ENCODE measurements at regions of chr16 and their contacts with region 1.

Region 1: DNA sequence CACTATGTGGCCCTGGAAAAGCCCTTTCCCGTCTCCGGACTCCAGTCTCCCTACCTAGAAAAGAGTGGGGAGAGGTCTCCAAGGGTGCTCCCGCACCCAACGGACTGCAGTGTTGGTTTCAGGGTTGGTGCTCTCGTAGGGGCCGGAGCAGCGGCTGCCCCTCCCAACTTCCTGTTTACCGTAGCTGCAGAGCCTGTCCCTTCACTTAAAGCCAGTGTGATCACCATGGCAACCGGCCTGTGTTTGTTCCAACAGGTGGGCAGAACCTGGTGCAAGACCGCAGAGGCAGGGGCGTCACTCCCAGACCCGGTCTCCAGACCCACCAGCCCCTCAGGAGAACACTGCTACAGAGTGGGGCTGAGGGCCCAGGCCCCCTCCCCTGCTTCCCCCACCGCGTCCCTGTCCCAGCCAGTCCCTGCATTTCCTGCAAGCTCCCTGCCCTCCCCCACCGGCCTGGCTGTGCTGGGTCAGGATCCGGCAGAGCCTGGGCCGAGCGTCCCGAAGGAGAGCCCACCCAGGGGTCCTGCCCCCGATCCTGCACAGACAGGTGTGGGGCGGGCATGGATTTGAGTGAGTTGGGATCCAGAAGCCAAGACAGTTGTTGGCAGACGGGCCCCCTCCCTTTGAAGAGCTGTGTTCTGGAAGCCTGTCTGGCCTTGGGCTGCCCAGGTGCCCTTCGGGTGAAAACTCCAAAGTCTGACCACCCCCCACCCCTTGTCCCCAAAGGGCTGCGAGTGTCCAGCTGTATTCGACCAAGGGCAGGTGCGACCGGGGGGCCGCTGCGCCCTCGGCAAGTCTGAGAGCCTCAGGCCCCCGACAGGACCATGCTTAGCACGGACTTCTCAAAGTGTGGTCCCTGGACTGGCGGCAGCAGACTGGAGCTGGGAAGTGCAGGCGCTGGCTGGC is 1.5 kb upstream of the BAIAP3 start:
- DNase-seq: peak; percentile 90
- ATAC-seq: peak; percentile 65
- H3K4me3 ChIP-seq: peak overlapping the region; percentile 34 to 63 (median 48)
- H3K4me3 Mint-ChIP-seq: peak overlapping the region; percentile 88
- H3K27ac ChIP-seq: peak overlapping the region; percentile 90 to 91
- H3K27ac Mint-ChIP-seq: peak overlapping the region; percentile 96
- H3K4me1 ChIP-seq: peaks cover 48 to 66% of the 10 kb centered on the region in 2 donors
- H3K4me1 Mint-ChIP-seq: peaks cover 23% of the 10 kb centered on the region
- H3K27me3 ChIP-seq: peaks cover 0 to 47% (median 20%) of the 10 kb centered on the region in 4 experiments
- H3K27me3 Mint-ChIP-seq: peaks cover 7% of the 10 kb centered on the region
- CTCF ChIP-seq: no peak

Region 2: DNA sequence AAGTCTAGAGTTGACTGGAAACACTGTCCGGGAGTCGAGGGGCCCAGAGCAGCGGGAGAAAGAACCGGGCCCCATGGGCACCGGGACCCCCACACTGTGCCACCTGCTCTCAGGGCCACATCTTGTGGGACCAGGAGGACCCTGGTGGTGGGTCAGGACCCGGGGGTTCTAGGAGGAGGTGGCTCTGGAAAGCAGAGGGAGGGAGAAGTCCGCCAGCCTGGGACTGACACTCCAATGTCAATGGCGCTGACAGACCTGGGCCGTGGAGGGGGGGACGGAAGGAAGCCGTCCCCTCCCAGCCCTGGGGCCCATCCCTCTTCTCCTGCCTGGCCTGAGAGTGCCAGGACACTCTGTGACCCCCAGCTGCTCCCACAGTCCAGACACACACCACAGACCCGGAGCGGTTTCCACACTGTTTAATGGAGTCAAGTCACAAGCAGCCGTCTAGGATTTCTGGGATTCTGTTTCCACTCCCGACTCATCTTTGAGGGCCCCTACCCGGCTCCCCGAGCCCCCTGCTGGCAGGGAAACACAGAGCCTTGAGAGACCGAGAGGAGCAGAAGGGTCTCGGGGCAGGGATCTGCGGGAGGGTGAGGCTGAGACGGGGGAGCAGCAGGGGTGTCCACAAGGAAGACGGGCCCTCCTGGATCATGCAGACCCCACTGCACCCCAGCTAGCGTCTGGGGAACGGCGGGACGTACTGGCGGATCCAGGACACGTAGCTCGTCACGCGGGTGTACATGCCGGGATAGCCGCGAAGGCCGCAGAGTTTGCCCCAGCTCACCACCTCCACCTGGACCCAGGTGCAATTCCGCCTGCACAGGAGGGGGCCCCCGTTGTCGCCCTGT is 46.1 kb before region 1 on chr16:
- CTCF ChIA-PET with region 1: no interaction called
- POLR2A ChIA-PET with region 1: no interaction called
- intact Hi-C with region 1: no loop called
- DNase-seq: no peak
- ATAC-seq: no peak
- H3K4me3 ChIP-seq: no peak overlapping the region
- H3K4me3 Mint-ChIP-seq: no peak overlapping the region
- H3K27ac ChIP-seq: no peak overlapping the region
- H3K27ac Mint-ChIP-seq: no peak overlapping the region
- H3K4me1 ChIP-seq: peaks cover 12% of the 10 kb centered on the region in 2 donors
- H3K4me1 Mint-ChIP-seq: peaks cover 4% of the 10 kb centered on the region
- H3K27me3 ChIP-seq: peaks cover 0 to 27% (median 5%) of the 10 kb centered on the region in 4 experiments
- H3K27me3 Mint-ChIP-seq: peaks cover 13% of the 10 kb centered on the region
- CTCF ChIP-seq: no peak

Region 3: GRCh38 chr16:1308977-1309885 is 22.7 kb before region 1 on chr16 and contains the start of gene UBE2I:
- CTCF ChIA-PET with region 1: interaction called, 3 read pairs
- POLR2A ChIA-PET with region 1: interaction called, 14 read pairs
- intact Hi-C with region 1: loop called (anchors 1 kb)
- DNase-seq: peak; percentile 100
- ATAC-seq: peak; percentile 74
- H3K4me3 ChIP-seq: peak within 1 kb of the TSS; percentile 80 to 90 (median 86)
- H3K4me3 Mint-ChIP-seq: peak within 1 kb of the TSS; percentile 99
- H3K27ac ChIP-seq: peak within 1 kb of the TSS; percentile 99 to 100
- H3K27ac Mint-ChIP-seq: peak within 1 kb of the TSS; percentile 100
- H3K4me1 ChIP-seq: peaks cover 41 to 65% of the 10 kb centered on the region in 2 donors
- H3K4me1 Mint-ChIP-seq: peaks cover 52% of the 10 kb centered on the region
- H3K27me3 ChIP-seq: no peaks in the 10 kb centered on the region
- H3K27me3 Mint-ChIP-seq: no peaks in the 10 kb centered on the region
- CTCF ChIP-seq: no peak
- total RNA-seq, gene UBE2I: 253 and 265 TPM in 2 replicates

Region 4: GRCh38 chr16:1450218-1450617 is 118.3 kb after region 1 on chr16:
- CTCF ChIA-PET with region 1: no interaction called
- POLR2A ChIA-PET with region 1: no interaction called
- intact Hi-C with region 1: no loop called
- DNase-seq: no peak
- ATAC-seq: no peak
- H3K4me3 ChIP-seq: no peak overlapping the region
- H3K4me3 Mint-ChIP-seq: no peak overlapping the region
- H3K27ac ChIP-seq: no peak overlapping the region
- H3K27ac Mint-ChIP-seq: peak overlapping the region; percentile 56
- H3K4me1 ChIP-seq: peaks cover 10 to 12% of the 10 kb centered on the region in 2 donors
- H3K4me1 Mint-ChIP-seq: no peaks in the 10 kb centered on the region
- H3K27me3 ChIP-seq: no peaks in the 10 kb centered on the region
- H3K27me3 Mint-ChIP-seq: no peaks in the 10 kb centered on the region
- CTCF ChIP-seq: no peak

Measured in B cell (primary cell).